HAP-1 (cell line): ENCODE measurements at regions of chr1 and their contacts with region 1.

Region 1: GRCh38 chr1:43529206-43529731 is 1.4 kb upstream of the PTPRF start:
- DNase-seq: peak; percentile 82 to 90
- H3K4me3 ChIP-seq: no peak overlapping the region
- H3K4me1 ChIP-seq: peaks cover 7% of the 10 kb centered on the region
- H3K27me3 ChIP-seq: no peaks in the 10 kb centered on the region

Region 2: DNA sequence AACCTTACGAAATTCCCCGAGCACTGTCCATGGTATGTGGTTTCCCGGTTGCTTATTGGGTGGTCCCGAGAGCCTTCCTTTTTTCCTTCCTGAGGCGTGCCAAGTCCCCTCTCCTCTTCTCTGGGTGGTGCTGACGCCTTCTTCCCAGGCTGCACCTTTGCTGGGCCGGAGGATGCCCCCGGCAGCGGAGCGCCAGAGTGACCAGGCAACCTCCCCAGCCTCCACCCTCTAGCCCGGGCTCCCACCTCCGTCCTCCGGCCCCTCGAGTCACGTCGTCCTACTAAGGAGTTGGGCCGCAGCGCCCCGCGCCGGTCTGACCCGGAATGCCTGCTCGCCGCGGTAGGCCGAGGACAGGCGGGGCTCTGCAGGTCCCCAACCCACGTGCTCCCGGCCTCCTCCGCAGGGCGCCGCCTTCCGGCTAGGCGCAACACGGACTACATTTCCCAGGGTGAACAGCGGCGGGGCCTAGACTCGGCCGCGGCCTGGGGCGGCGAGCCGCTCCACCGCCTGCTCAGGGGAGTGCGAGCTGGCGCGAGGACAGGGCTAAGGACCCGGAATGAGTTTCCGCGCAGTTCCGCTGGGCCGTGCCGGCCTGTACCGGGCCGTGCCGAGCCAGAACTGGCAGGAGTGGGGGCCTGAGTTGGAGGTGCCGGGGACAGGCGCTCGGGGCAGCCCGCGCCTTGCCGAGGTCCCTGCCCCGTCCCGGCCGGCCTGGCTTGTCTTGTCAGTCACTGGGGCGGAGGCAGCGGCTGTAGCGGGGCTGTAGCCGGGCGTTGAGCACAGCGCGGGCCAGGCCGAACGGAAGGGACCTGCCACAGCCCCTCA is 417.2 kb after region 1 on chr1 and contains the start of gene IPO13:
- in situ Hi-C with region 1: loop called (anchors 25 kb)
- DNase-seq: peak; percentile 93 to 97
- H3K4me3 ChIP-seq: peak within 1 kb of the TSS; percentile 53
- H3K4me1 ChIP-seq: peaks cover 6% of the 10 kb centered on the region
- H3K27me3 ChIP-seq: no peaks in the 10 kb centered on the region